Mammary epithelial cell (primary cell): ENCODE measurements at regions of chr3 and their contacts with region 1.

Region 1: GRCh38 chr3:150495563-150496168 is 50.6 kb downstream of the SERP1 start:
- DNase-seq: peak; percentile 29
- H3K4me3 ChIP-seq: no peak overlapping the region
- H3K27ac ChIP-seq: no peak overlapping the region
- H3K4me1 ChIP-seq: no peaks in the 10 kb centered on the region
- H3K27me3 ChIP-seq: no peaks in the 10 kb centered on the region
- CTCF ChIP-seq: peak; percentile 59 to 60

Region 2: DNA sequence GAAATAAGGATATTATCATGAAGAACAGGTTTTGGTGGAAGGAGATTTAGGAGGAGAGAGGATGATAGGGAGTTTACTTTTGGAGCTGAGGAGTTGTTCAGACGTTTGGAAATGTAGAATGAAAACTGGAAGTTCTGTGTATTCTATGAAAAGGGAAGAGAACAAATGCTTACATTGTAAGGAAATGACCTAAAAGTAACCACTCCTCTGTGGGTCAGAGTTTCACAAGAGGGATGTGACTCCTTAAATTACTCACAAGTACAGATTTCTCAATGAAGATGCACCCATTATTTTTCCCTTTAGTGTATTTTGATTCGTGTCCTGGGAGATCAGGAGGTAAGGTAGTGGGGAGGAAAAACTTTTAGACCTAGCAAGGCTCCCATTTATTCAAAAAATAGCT is 678.7 kb before region 1 on chr3:
- CTCF ChIA-PET with region 1: no interaction called
- dilution Hi-C with region 1: no loop called
- in situ Hi-C with region 1: no loop called
- intact Hi-C with region 1: no loop called
- DNase-seq: peak; percentile 88
- H3K4me3 ChIP-seq: no peak overlapping the region
- H3K27ac ChIP-seq: peak overlapping the region; percentile 96
- H3K4me1 ChIP-seq: peaks cover 34% of the 10 kb centered on the region
- H3K27me3 ChIP-seq: no peaks in the 10 kb centered on the region
- CTCF ChIP-seq: no peak

Region 3: DNA sequence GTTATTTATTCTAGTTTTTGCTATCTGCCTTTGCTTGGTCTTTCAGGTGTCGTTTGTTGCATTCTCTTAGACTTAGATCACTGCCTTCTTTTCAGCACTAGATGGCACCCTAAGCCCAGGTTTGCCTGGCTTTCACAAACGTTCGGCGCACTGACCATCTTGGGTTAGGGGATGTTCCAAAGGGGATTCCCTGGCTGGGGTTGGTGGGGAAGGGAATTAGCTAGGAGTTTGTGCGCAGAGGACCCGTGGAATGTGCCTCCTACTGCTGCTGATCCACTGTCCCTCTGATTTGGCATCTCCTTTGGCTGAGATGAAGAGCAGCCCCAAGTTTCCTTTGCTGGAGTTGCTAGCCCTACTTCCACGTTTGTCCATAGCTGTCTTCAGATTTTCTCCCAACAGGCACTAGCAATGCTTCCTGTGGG is 558.8 kb before region 1 on chr3:
- CTCF ChIA-PET with region 1: no interaction called
- dilution Hi-C with region 1: no loop called
- in situ Hi-C with region 1: no loop called
- intact Hi-C with region 1: loop called (anchors 5 kb)
- DNase-seq: peak; percentile 32
- H3K4me3 ChIP-seq: no peak overlapping the region
- H3K27ac ChIP-seq: no peak overlapping the region
- H3K4me1 ChIP-seq: no peaks in the 10 kb centered on the region
- H3K27me3 ChIP-seq: no peaks in the 10 kb centered on the region
- CTCF ChIP-seq: peak; percentile 78 to 81

Region 4: GRCh38 chr3:150227839-150228238 is 267.8 kb before region 1 on chr3:
- CTCF ChIA-PET with region 1: interaction called, 5 read pairs
- dilution Hi-C with region 1: no loop called
- in situ Hi-C with region 1: loop called (anchors 5 kb)
- intact Hi-C with region 1: loop called (anchors 1 kb)
- DNase-seq: no peak
- H3K4me3 ChIP-seq: no peak overlapping the region
- H3K27ac ChIP-seq: no peak overlapping the region
- H3K4me1 ChIP-seq: peaks cover 5% of the 10 kb centered on the region
- H3K27me3 ChIP-seq: no peaks in the 10 kb centered on the region
- CTCF ChIP-seq: peak; percentile 82 to 83

Region 5: GRCh38 chr3:150238998-150239619 is 256.6 kb before region 1 on chr3:
- CTCF ChIA-PET with region 1: interaction called, 8 read pairs
- dilution Hi-C with region 1: no loop called
- in situ Hi-C with region 1: loop called in 1 of 2 experiments (anchors 5 kb)
- intact Hi-C with region 1: loop called (anchors 1 kb)
- DNase-seq: peak; percentile 59
- H3K4me3 ChIP-seq: no peak overlapping the region
- H3K27ac ChIP-seq: no peak overlapping the region
- H3K4me1 ChIP-seq: peaks cover 38% of the 10 kb centered on the region
- H3K27me3 ChIP-seq: no peaks in the 10 kb centered on the region
- CTCF ChIP-seq: peak; percentile 62 to 72

Region 6: GRCh38 chr3:150286390-150287147 is 209.1 kb before region 1 on chr3:
- CTCF ChIA-PET with region 1: no interaction called
- dilution Hi-C with region 1: no loop called
- in situ Hi-C with region 1: no loop called
- intact Hi-C with region 1: loop called (anchors 1 kb)
- DNase-seq: peak; percentile 56
- H3K4me3 ChIP-seq: no peak overlapping the region
- H3K27ac ChIP-seq: no peak overlapping the region
- H3K4me1 ChIP-seq: peaks cover 4% of the 10 kb centered on the region
- H3K27me3 ChIP-seq: no peaks in the 10 kb centered on the region
- CTCF ChIP-seq: peak; percentile 57 to 72

Region 7: GRCh38 chr3:150521463-150521862 is 25.8 kb after region 1 on chr3:
- CTCF ChIA-PET with region 1: no interaction called
- dilution Hi-C with region 1: no loop called
- in situ Hi-C with region 1: no loop called
- intact Hi-C with region 1: no loop called
- DNase-seq: no peak
- H3K4me3 ChIP-seq: no peak overlapping the region
- H3K27ac ChIP-seq: no peak overlapping the region
- H3K4me1 ChIP-seq: peaks cover 4% of the 10 kb centered on the region
- H3K27me3 ChIP-seq: no peaks in the 10 kb centered on the region
- CTCF ChIP-seq: no peak